OCI-LY7 (cell line): ENCODE measurements at regions of chr4 and their contacts with region 1.

Region 1: DNA sequence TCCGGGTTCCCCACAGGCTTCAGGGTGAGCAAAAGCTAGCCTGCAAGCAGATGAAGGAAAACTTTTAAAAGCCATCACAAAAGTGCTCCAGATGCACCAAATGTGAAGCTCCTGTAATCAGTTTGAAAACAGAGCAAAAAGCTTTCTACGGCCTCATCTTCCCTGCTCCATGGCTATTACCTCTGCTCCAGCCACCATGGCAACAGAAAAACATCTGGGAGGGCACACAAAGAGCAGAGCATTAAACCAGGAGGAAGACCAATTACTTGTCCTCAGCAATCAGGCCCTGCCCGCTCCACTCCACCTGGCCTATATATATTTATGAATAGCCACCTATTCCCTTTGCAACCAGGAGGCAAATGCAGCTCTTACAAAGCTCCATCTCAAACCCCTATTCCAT is 33.6 kb downstream of the TMEM154 start:
- DNase-seq: no peak
- H3K4me3 ChIP-seq: no peak overlapping the region
- H3K27ac ChIP-seq: peak overlapping the region; percentile 86
- H3K4me1 ChIP-seq: peaks cover 78% of the 10 kb centered on the region
- CTCF ChIP-seq: no peak

Region 2: DNA sequence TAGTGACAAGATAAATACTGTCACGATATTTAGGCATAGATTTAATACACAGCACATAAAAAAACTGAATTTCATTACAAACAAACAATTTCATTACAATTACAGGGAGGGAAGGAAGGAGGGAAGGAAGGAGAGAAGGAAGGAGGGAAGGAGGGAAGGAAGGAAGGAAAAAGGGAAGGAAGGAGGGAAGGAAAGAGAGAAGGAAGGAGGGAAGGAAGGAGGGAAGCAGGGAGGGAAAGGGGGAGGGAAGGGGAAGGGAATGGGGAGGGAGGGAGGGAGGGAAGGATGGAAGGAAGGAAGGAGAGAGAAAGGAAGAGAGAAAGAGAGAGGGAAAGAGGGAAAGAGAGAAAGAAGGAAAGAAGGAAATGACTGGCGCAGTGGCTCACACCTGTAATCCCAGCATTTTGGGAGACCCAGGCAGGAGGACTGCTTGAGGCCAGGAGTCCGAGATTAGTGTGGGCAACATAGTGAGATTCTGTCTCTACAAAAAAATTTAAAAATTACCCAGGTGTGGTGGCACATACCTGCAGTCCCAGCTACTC is 174.9 kb before region 1 on chr4:
- CTCF ChIA-PET with region 1: no interaction called
- POLR2A ChIA-PET with region 1: interaction called, 11 read pairs
- intact Hi-C with region 1: no loop called
- DNase-seq: no peak
- H3K4me3 ChIP-seq: no peak overlapping the region
- H3K27ac ChIP-seq: no peak overlapping the region
- H3K4me1 ChIP-seq: no peaks in the 10 kb centered on the region
- CTCF ChIP-seq: no peak